Mammary epithelial cell (primary cell): ENCODE measurements at regions of chr6 and their contacts with region 1.

Region 1: DNA sequence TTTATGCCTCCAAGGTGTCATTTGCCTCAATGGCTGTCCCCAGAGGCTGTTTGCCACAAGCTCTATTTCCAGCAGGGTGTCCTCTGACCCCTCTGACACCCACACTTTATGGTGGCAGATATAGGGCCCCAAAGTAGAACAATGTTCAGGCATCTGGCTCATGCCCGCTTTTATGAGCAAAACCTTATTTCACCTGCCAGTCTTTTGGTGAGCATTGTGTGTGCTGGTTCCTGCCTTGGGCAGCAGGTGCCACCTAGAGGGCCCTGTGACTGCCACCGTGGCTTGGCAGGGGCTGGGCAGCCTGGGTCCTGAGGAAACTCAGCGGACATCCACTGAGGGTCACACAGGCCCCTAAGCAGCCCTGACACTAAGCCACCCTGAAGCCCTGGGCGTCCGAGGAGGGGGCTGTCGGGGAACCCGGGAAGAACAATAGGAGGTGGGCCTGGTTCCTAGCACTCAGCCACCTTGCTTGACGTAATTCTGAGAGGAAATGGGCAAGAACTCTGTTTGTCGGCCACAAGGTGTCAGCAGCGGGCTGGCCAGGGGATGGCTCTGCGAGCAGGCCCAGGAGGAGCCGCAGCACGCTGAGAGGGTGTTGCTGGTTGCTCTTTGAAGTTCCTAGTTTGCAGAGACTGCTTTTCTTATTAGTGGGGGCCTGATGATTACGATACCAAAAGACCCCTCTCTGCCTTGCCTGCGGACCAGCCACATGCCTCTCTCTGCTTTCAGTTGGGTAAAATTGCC is 148.9 kb downstream of the SCML4 start:
- DNase-seq: peak; percentile 71
- H3K4me3 ChIP-seq: peak overlapping the region in 2 of 3 experiments; percentile 9 to 42
- H3K27ac ChIP-seq: no peak overlapping the region
- H3K4me1 ChIP-seq: no peaks in the 10 kb centered on the region
- H3K27me3 ChIP-seq: no peaks in the 10 kb centered on the region
- CTCF ChIP-seq: peak; percentile 80 to 93

Region 2: GRCh38 chr6:107132330-107132954 is 542.7 kb before region 1 on chr6:
- CTCF ChIA-PET with region 1: no interaction called
- dilution Hi-C with region 1: no loop called
- in situ Hi-C with region 1: no loop called
- intact Hi-C with region 1: loop called (anchors 1 kb)
- DNase-seq: no peak
- H3K4me3 ChIP-seq: no peak overlapping the region
- H3K27ac ChIP-seq: no peak overlapping the region
- H3K4me1 ChIP-seq: no peaks in the 10 kb centered on the region
- H3K27me3 ChIP-seq: no peaks in the 10 kb centered on the region
- CTCF ChIP-seq: peak in 1 of 2 donors; percentile 53

Region 3: DNA sequence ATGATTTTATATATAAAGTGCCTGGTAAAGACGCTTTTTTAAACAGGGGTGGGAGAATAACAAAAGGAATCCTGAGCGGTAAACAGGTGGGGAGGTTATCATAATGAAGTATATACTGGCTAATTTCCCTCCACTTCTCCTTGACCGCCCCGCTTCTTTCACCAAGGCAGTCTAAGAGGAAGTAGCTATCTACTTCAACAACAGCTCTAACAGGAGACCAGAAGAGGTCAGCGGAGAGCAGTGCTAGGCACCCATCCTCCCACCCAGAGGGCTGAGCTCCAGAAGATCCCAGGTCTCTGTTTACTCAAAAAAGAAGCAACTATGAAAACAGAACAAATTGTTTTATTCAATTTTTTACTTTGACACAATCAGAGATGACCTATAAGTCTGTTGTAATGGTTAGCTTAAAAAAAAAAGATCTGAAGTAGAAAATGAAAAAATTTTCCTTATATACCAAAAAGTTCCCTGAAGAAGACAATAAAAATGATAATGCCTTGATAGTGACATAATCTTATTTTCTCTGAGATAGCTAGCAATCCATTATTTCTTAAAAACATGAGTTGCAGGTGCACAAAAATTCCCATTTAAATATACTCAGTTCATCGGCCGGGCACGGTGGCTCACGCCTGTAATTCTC is 356.9 kb before region 1 on chr6:
- CTCF ChIA-PET with region 1: interaction called, 4 read pairs
- dilution Hi-C with region 1: no loop called
- in situ Hi-C with region 1: no loop called
- intact Hi-C with region 1: loop called (anchors 1 kb)
- DNase-seq: peak; percentile 19
- H3K4me3 ChIP-seq: no peak overlapping the region
- H3K27ac ChIP-seq: no peak overlapping the region
- H3K4me1 ChIP-seq: peaks cover 1% of the 10 kb centered on the region
- H3K27me3 ChIP-seq: no peaks in the 10 kb centered on the region
- CTCF ChIP-seq: peak; percentile 67 to 85

Region 4: DNA sequence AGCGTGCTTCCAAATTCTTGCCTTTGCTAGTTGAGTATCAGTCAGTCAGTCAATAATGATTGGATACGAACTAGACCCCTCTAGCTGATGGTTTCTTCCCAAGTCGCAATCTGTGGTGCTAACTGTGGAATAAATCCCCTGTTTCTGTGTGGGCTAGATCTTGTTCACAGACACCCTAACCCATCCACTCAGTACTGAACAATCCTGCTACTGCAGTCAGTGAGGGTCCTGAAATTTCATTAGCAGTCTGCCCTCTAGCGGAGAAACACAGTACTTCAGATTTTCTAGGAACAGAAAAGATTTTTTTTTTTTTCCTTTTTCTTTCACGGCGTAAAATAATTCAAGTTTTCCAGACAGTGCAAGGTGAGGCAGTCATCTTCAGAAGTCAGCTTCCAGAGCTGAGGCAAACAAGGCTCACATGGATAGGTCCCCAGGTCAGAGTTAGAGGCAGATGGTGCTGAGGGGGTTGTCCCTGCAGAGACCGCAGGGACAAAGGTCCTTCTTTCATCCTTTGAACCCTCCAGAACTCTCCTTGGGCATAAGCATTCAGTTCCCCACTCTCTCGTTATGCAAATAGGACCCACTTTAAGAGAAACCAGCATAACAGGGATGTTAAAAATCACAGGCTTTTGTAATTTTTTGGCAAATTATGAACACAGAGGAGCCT is 29.3 kb after region 1 on chr6:
- CTCF ChIA-PET with region 1: no interaction called
- dilution Hi-C with region 1: no loop called
- in situ Hi-C with region 1: no loop called
- intact Hi-C with region 1: loop called (anchors 1 kb)
- DNase-seq: no peak
- H3K4me3 ChIP-seq: no peak overlapping the region
- H3K27ac ChIP-seq: no peak overlapping the region
- H3K4me1 ChIP-seq: no peaks in the 10 kb centered on the region
- H3K27me3 ChIP-seq: no peaks in the 10 kb centered on the region
- CTCF ChIP-seq: peak; percentile 74 to 75

Region 5: DNA sequence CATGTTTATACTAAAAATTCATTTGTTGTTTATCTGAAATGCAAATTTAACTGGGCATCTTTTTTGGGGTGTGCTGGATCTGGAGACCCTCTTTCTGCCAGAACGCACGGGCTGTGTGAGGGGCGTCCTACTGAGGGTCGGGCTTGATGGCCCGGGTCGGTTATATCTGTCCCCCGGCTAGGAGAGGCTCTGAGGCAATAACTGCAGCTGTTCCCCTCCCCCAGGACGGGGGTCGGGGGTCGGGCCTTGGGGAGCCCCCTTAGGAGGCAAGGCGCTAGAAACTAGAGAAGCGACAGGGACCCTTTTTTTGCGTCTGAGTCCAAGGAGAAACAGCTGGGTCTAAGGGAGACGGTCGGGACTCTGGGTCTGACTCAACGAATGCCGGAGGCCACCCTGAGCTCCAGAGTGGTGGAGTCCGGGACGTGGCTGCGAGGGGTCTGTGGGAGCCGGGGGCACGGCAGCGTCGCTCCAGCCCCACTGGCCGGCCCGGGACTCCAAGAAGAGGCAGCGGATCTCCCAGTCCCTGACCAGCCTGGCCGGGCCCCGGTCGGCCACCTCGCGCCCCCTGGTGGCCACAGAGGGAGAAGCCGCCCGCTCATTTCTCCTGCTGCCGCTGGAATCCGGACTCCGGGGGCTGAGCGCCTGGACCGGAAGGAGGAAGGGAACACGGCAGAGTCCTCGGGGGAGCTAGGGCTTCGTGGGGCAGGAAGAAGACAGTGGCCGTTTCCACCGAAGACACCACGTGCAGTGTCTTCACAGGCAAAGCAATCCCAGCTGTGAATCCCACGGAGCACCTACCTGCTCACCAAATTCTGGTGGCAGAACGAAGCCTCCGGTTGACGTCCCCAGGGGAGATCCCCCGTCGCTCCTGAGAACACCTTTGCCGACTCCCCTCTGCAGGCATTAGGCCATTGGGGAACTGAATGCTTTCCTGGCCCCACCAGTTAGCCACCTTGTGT is 173.0 kb after region 1 on chr6:
- CTCF ChIA-PET with region 1: interaction called, 4 read pairs
- dilution Hi-C with region 1: no loop called
- in situ Hi-C with region 1: loop called (anchors 10 kb)
- intact Hi-C with region 1: loop called (anchors 1 kb)
- DNase-seq: peak; percentile 66
- H3K4me3 ChIP-seq: peak overlapping the region; percentile 11 to 48 (median 40)
- H3K27ac ChIP-seq: no peak overlapping the region
- H3K4me1 ChIP-seq: peaks cover 12% of the 10 kb centered on the region
- H3K27me3 ChIP-seq: no peaks in the 10 kb centered on the region
- CTCF ChIP-seq: peak; percentile 59 to 91

Region 6: DNA sequence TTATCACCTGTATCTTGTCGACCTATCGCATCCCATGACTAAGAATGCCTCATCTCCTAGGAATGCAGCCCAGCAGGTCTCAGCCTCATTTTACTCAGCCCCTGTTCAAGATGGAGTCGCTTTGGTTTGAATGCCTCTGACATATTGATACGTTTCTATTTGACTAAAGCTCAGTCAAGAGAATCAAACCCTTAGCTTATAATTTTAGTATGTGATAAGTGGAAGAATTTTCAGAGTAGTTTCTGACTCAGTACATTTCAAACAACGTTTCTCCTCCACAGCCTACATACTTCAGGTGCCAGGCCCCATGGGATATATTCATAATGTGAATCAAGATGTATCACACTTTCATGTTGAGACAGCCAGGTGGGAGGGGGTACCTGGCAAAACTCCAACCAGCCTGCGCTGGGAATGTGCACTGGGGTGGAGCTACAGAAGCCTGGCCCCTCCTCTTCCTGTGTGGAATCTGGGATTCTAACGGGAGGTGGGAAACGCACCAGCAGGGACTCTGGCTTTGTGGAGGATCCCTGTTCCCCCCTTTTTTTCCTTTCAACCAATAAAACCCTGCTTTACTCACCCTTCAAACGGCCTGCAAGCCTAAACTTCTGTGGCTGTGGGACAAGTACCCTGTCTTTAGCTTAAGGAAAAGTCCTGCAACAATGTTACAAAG is 289.6 kb after region 1 on chr6:
- CTCF ChIA-PET with region 1: no interaction called
- dilution Hi-C with region 1: no loop called
- in situ Hi-C with region 1: no loop called
- intact Hi-C with region 1: no loop called
- DNase-seq: peak; percentile 84
- H3K4me3 ChIP-seq: no peak overlapping the region
- H3K27ac ChIP-seq: peak overlapping the region; percentile 91
- H3K4me1 ChIP-seq: peaks cover 26% of the 10 kb centered on the region
- H3K27me3 ChIP-seq: no peaks in the 10 kb centered on the region
- CTCF ChIP-seq: no peak

Region 7: GRCh38 chr6:107991061-107991460 is 315.9 kb after region 1 on chr6:
- CTCF ChIA-PET with region 1: no interaction called
- dilution Hi-C with region 1: no loop called
- in situ Hi-C with region 1: no loop called
- intact Hi-C with region 1: no loop called
- DNase-seq: peak; percentile 69
- H3K4me3 ChIP-seq: no peak overlapping the region
- H3K27ac ChIP-seq: peak overlapping the region; percentile 61
- H3K4me1 ChIP-seq: peaks cover 18% of the 10 kb centered on the region
- H3K27me3 ChIP-seq: no peaks in the 10 kb centered on the region
- CTCF ChIP-seq: no peak

Region 8: GRCh38 chr6:108526739-108527174 is 851.6 kb after region 1 on chr6:
- CTCF ChIA-PET with region 1: no interaction called
- dilution Hi-C with region 1: no loop called
- in situ Hi-C with region 1: no loop called
- intact Hi-C with region 1: loop called (anchors 5 kb)
- DNase-seq: peak; percentile 16
- H3K4me3 ChIP-seq: no peak overlapping the region
- H3K27ac ChIP-seq: no peak overlapping the region
- H3K4me1 ChIP-seq: no peaks in the 10 kb centered on the region
- H3K27me3 ChIP-seq: no peaks in the 10 kb centered on the region
- CTCF ChIP-seq: peak; percentile 78 to 80